ENCODE measurements at regions of chr3 and their contacts with region 1.

Region 1: DNA sequence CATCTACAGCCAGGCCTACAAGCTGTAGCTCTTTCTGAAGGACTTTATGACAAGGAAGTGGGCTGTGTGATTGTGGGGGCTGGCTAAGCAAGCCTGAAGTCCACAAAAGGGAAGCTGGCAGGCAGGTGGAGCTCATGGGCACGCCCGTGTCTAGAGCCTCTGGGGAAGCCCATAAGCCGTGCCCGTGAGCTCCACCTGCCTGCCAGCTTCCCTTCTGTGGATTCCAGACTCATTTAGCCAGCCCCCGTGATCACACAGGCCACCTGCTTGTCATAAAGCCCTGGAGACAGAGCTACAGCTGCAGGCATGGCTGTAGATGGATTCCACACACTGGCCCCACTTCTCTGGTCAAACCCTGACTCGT is 15.2 kb downstream of the EFCC1 start:
- DNase-seq: peak; percentile 42 to 88 (median 64)
- ATAC-seq: peak; percentile 86
- H3K4me3 ChIP-seq: peak overlapping the region; percentile 37
- H3K4me3 Mint-ChIP-seq: peak overlapping the region; percentile 89
- H3K27ac ChIP-seq: peak overlapping the region; percentile 79 to 82
- H3K27ac Mint-ChIP-seq: peak overlapping the region; percentile 80
- H3K4me1 ChIP-seq: peaks cover 46% of the 10 kb centered on the region
- H3K4me1 Mint-ChIP-seq: peaks cover 45% of the 10 kb centered on the region
- H3K27me3 ChIP-seq: no peaks in the 10 kb centered on the region
- H3K27me3 Mint-ChIP-seq: no peaks in the 10 kb centered on the region
- CTCF ChIP-seq: peak; percentile 26

Region 2: DNA sequence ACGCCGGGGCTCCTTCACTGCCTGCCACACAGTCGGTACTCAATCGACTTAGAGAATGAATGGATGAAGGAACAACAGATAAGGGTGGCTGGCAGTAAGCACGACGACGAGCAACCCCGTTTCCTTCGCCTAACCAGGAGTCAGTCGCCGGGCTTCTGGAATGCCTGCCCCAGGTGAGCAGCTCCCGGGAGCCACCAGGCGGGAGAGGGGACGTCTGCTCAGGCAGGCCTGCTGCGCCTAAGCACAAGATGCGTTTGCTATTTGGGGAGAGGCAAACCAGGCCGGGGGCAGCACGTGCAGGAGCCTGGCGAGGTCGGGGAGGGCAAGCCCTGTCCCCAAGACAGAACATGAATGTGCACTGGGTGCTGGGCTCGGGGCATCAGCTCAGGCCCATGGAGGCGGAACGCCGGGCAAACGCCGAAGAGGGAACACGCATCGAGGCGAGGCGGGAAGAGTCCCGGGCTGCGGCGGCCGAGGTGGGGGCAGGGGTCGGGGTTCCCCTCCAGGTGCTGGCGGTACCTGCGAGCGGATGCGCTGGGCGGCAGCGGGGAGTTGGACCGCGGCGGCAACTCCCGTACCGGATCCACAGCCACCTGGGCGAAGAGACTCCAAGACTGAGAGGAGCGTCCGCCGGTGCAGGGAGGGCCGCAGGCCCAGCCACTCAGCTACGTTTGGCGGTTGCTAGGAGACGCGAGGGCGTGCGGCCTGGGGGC is 22.7 kb before region 1 on chr3 and contains the start of gene CFAP92:
- CTCF ChIA-PET with region 1: interaction called, 13 read pairs
- POLR2A ChIA-PET with region 1: interaction called, 49 read pairs
- intact Hi-C with region 1: no loop called
- DNase-seq: peak; percentile 85 to 96 (median 90)
- ATAC-seq: peak; percentile 97
- H3K4me3 ChIP-seq: peak within 1 kb of the TSS; percentile 48
- H3K4me3 Mint-ChIP-seq: peak within 1 kb of the TSS; percentile 80
- H3K27ac ChIP-seq: peak within 1 kb of the TSS; percentile 30 to 38
- H3K27ac Mint-ChIP-seq: peak within 1 kb of the TSS; percentile 78
- H3K4me1 ChIP-seq: peaks cover 30% of the 10 kb centered on the region
- H3K4me1 Mint-ChIP-seq: peaks cover 47% of the 10 kb centered on the region
- H3K27me3 ChIP-seq: no peaks in the 10 kb centered on the region
- H3K27me3 Mint-ChIP-seq: no peaks in the 10 kb centered on the region
- CTCF ChIP-seq: no peak
- total RNA-seq, gene CFAP92: 0.19 to 0.45 TPM

Region 3: GRCh38 chr3:129026728-129027543 is 10.6 kb after region 1 on chr3:
- CTCF ChIA-PET with region 1: interaction called, 56 read pairs
- POLR2A ChIA-PET with region 1: interaction called, 90 read pairs
- intact Hi-C with region 1: loop called in 1 of 2 experiments (anchors 1 kb)
- DNase-seq: peak; percentile 85 to 97 (median 90)
- ATAC-seq: peak; percentile 99
- H3K4me3 ChIP-seq: peak overlapping the region; percentile 54
- H3K4me3 Mint-ChIP-seq: peak overlapping the region; percentile 78
- H3K27ac ChIP-seq: peak overlapping the region; percentile 71 to 83
- H3K27ac Mint-ChIP-seq: peak overlapping the region; percentile 95
- H3K4me1 ChIP-seq: peaks cover 22% of the 10 kb centered on the region
- H3K4me1 Mint-ChIP-seq: peaks cover 18% of the 10 kb centered on the region
- H3K27me3 ChIP-seq: no peaks in the 10 kb centered on the region
- H3K27me3 Mint-ChIP-seq: no peaks in the 10 kb centered on the region
- CTCF ChIP-seq: peak; percentile 82

Region 4: DNA sequence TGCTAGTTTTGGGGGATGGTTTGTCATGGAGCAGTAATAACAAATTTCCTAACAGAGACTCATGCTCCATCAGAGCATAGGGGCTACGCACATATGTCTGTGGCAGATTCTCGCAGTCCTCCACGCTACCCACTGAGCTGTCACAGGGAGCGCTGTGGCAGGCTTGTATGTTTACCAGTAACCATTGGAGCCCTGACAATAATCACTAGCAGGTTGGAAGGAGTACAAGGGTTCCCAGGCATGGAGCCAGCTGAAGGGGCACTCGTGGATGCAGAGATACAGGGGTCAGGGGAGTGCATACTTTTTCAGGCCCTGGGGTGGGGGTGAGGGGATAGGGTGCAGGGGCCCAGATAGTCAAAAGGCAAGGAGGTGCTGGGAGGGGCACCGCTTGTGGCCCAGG is 36.3 kb after region 1 on chr3:
- CTCF ChIA-PET with region 1: interaction called, 11 read pairs
- POLR2A ChIA-PET with region 1: interaction called, 11 read pairs
- intact Hi-C with region 1: no loop called
- DNase-seq: no peak
- ATAC-seq: no peak
- H3K4me3 ChIP-seq: no peak overlapping the region
- H3K4me3 Mint-ChIP-seq: no peak overlapping the region
- H3K27ac ChIP-seq: no peak overlapping the region
- H3K27ac Mint-ChIP-seq: no peak overlapping the region
- H3K4me1 ChIP-seq: peaks cover 5% of the 10 kb centered on the region
- H3K4me1 Mint-ChIP-seq: peaks cover 9% of the 10 kb centered on the region
- H3K27me3 ChIP-seq: no peaks in the 10 kb centered on the region
- H3K27me3 Mint-ChIP-seq: no peaks in the 10 kb centered on the region
- CTCF ChIP-seq: no peak

Region 5: DNA sequence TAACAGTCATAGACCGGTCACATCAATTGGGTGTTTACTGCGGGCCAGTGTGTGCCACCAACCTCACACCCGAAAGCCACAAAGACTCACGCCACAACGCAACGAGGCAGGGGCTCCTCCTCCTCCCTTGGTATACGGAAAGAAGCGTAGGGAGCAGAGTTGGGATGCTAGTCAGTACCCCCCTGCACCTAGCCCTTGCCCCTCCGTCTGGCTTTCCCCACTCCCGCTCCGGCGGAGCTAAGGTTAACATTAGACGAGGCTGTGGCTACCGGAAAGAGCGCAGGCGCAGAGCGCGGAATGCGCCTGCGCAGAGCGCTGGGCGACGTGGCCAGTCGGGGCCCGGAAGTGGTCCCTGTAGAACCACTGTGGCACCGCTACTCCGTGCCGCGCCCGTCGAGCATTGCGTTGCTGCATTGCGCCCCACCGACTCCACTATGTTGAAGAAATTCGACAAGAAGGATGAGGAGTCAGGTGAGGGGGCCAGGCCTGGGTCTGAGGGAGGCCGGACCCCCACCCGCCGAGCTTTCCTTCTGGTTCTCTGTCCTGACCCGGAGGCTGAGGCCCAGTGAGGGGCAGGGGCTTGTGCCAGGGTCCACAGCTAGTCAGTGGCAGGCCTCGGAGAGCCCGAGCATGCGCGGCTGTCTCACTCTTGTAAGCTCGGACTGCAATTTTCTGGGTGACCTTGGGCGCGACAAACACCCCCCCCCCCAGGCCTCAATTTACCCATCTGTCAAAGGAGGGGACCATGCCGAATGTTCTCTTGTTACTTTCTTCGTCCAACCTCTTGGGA is 233.1 kb after region 1 on chr3 and contains the start of gene COPG1:
- CTCF ChIA-PET with region 1: interaction called, 14 read pairs
- POLR2A ChIA-PET with region 1: interaction called, 7 read pairs
- intact Hi-C with region 1: no loop called
- DNase-seq: peak; percentile 72 to 94 (median 86)
- ATAC-seq: peak; percentile 85
- H3K4me3 ChIP-seq: peak within 1 kb of the TSS; percentile 100
- H3K4me3 Mint-ChIP-seq: peak within 1 kb of the TSS; percentile 98
- H3K27ac ChIP-seq: peak within 1 kb of the TSS; percentile 79 to 88
- H3K27ac Mint-ChIP-seq: peak within 1 kb of the TSS; percentile 97
- H3K4me1 ChIP-seq: peaks cover 47% of the 10 kb centered on the region
- H3K4me1 Mint-ChIP-seq: peaks cover 55% of the 10 kb centered on the region
- H3K27me3 ChIP-seq: no peaks in the 10 kb centered on the region
- H3K27me3 Mint-ChIP-seq: no peaks in the 10 kb centered on the region
- CTCF ChIP-seq: no peak
- total RNA-seq, gene COPG1: 77.7 to 79.3 TPM

Measured in CD4-positive, alpha-beta T cell (primary cell).